CD4-positive, alpha-beta memory T cell (primary cell): ENCODE measurements at regions of chr1 and their contacts with region 1.

Region 1: DNA sequence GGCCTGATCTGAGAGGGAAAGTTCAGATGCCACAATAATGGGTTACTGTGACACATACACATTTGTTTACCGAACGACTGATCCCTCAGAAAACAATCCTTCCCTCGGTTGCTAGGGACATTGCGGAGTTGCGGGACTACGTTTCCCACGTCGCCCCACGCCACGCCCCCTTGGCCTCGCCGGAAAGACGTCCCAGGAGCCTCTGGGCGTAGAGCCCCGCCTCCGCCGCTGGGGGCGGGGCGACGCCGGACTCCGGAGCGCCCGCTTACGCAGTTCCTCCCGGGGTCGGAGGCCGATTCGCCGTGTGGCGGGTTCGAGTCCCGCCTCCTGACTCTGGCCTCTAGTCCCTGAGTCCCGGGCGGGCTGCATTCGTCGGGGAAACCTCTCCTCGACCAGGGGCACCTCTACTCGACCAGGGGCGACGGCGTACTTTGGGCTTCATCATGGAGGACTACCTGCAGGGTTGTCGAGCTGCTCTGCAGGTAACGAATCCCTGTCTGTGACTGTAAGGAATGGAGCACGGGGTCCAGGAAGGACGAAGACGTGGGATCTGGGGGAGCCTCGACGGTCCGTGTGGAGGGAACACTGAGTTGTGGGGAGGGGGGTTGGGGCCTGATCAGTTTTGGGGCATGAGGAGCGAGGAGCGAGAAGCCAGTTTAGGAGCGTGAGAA is at the start of gene PRUNE1:
- DNase-seq: peak; percentile 92 to 99 (median 96)
- H3K4me3 ChIP-seq: peak within 1 kb of the TSS; percentile 74 to 92
- H3K4me3 Mint-ChIP-seq: peak within 1 kb of the TSS; percentile 88 to 99 (median 95)
- H3K27ac ChIP-seq: peak within 1 kb of the TSS; percentile 88
- H3K27ac Mint-ChIP-seq: peak within 1 kb of the TSS; percentile 90 to 100 (median 99)
- H3K4me1 ChIP-seq: peaks cover 67% of the 10 kb centered on the region
- H3K4me1 Mint-ChIP-seq: peaks cover 47 to 93% (median 69%) of the 10 kb centered on the region in 4 donors
- H3K27me3 ChIP-seq: no peaks in the 10 kb centered on the region
- H3K27me3 Mint-ChIP-seq: no peaks in the 10 kb centered on the region
- total RNA-seq, gene PRUNE1: 35.0 to 38.9 TPM

Region 2: GRCh38 chr1:150979092-150980056 is 29.0 kb before region 1 on chr1:
- CTCF ChIA-PET with region 1: interaction called, 255 read pairs
- POLR2A ChIA-PET with region 1: interaction called, 30 read pairs
- intact Hi-C with region 1: loop called (anchors 1 kb)
- DNase-seq: peak; percentile 83 to 87 (median 85)
- H3K4me3 ChIP-seq: peak overlapping the region in 1 of 2 donors; percentile 52
- H3K4me3 Mint-ChIP-seq: peak overlapping the region in 4 of 8 donors; percentile 29 to 59 (median 41)
- H3K27ac ChIP-seq: peak overlapping the region; percentile 11
- H3K27ac Mint-ChIP-seq: peak overlapping the region in 6 of 7 donors; percentile 48 to 83 (median 64)
- H3K4me1 ChIP-seq: peaks cover 39% of the 10 kb centered on the region
- H3K4me1 Mint-ChIP-seq: peaks cover 20 to 44% (median 31%) of the 10 kb centered on the region in 4 donors
- H3K27me3 ChIP-seq: no peaks in the 10 kb centered on the region
- H3K27me3 Mint-ChIP-seq: no peaks in the 10 kb centered on the region

Region 3: DNA sequence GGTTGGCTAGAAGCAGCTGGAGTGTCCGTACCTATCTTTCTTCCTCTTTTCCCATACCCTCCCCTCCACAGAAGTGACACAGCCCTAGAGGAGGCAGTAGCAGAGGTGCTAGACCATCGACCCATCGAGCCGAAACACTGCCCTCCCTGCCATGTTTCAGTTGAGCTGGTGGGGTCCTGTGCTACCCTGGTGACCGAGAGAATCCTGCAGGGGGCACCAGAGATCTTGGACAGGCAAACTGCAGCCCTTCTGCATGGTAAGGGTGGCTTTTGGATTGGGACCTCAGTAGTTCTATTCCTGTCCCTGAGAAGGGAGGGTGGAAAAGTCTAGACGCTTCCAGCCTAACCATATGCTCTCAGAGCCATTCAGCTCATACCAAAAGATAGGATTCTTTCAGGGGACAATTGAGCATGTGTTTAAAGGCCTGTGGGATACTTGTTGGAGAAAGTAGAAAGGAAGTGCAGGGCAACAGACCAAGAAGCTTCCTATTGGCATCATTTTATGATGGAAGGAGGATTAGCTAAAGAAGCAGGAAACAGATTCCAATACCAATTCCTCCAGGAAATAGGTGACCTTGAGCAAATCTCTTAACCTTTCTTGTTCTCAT is 16.3 kb after region 1 on chr1:
- CTCF ChIA-PET with region 1: interaction called, 18 read pairs
- POLR2A ChIA-PET with region 1: interaction called, 6 read pairs
- intact Hi-C with region 1: no loop called
- DNase-seq: peak; percentile 81 to 86 (median 85)
- H3K4me3 ChIP-seq: no peak overlapping the region
- H3K4me3 Mint-ChIP-seq: peak overlapping the region in 5 of 8 donors; percentile 22 to 65 (median 54)
- H3K27ac ChIP-seq: no peak overlapping the region
- H3K27ac Mint-ChIP-seq: peak overlapping the region; percentile 41 to 86 (median 73)
- H3K4me1 ChIP-seq: peaks cover 7% of the 10 kb centered on the region
- H3K4me1 Mint-ChIP-seq: peaks cover 5 to 11% (median 6%) of the 10 kb centered on the region in 4 donors
- H3K27me3 ChIP-seq: no peaks in the 10 kb centered on the region
- H3K27me3 Mint-ChIP-seq: no peaks in the 10 kb centered on the region

Region 4: GRCh38 chr1:151059078-151059907 is 51.0 kb after region 1 on chr1 and contains the start of gene CDC42SE1:
- CTCF ChIA-PET with region 1: interaction called, 9 read pairs
- POLR2A ChIA-PET with region 1: interaction called, 34 read pairs
- intact Hi-C with region 1: loop called (anchors 1 kb)
- DNase-seq: peak; percentile 81 to 85 (median 85)
- H3K4me3 ChIP-seq: peak within 1 kb of the TSS; percentile 89 to 93
- H3K4me3 Mint-ChIP-seq: peak within 1 kb of the TSS; percentile 96 to 100 (median 100)
- H3K27ac ChIP-seq: peak within 1 kb of the TSS; percentile 90
- H3K27ac Mint-ChIP-seq: peak within 1 kb of the TSS; percentile 98 to 100 (median 99)
- H3K4me1 ChIP-seq: peaks cover 45% of the 10 kb centered on the region
- H3K4me1 Mint-ChIP-seq: peaks cover 31 to 70% (median 38%) of the 10 kb centered on the region in 4 donors
- H3K27me3 ChIP-seq: no peaks in the 10 kb centered on the region
- H3K27me3 Mint-ChIP-seq: peaks cover 0 to 1% of the 10 kb centered on the region in 2 donors
- total RNA-seq, gene CDC42SE1: 478 to 483 TPM

Region 5: DNA sequence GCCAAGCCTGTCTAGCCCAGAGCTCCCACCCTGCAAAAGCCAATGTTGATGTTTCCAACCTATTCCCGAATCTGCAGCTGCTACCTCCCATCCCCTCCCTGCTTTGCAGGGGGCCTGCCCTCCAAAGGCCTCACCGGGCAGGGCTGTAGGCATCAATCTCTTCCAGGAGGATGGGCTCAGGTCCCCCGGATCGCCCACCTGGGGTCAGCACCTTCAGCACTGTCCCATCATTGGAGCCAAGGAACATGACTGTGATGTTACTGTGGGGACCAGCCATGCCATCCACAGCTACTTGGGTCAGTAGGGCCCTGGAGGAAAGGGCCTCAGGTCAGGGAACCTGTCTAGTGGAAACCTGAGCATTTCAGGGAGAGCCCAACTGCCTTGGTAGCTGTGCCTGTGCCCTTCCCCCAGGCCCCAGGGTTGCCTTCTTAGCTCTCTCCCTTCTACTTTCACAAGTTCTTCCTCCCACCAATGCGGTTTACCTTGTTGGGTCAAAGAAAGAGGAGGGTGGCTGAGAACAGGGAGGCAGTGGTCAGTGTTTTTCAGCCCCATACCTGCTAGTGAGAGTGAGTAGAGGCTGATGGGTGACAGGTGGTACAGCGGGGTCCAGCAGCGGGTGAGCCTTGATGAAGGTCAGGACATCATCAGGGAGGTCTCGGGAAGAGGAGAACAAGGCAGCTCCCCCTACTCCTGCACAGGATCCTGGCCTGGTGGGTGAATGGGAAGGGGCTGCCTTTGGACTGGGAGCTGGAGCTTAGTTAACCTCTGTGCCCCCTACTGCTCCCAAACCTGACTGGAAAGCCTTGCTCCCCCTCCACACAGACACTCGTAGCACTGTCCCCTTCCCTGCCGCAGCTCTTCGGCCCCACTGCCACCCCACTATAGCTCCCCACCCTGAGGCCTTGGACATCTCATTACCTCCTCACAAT is 127.4 kb after region 1 on chr1:
- CTCF ChIA-PET with region 1: no interaction called
- POLR2A ChIA-PET with region 1: no interaction called
- intact Hi-C with region 1: no loop called
- DNase-seq: no peak
- H3K4me3 ChIP-seq: no peak overlapping the region
- H3K4me3 Mint-ChIP-seq: no peak overlapping the region
- H3K27ac ChIP-seq: no peak overlapping the region
- H3K27ac Mint-ChIP-seq: no peak overlapping the region
- H3K4me1 ChIP-seq: peaks cover 12% of the 10 kb centered on the region
- H3K4me1 Mint-ChIP-seq: peaks cover 2 to 11% (median 7%) of the 10 kb centered on the region in 4 donors
- H3K27me3 ChIP-seq: peaks cover 5% of the 10 kb centered on the region
- H3K27me3 Mint-ChIP-seq: peaks cover 3 to 9% of the 10 kb centered on the region in 2 donors

Region 6: DNA sequence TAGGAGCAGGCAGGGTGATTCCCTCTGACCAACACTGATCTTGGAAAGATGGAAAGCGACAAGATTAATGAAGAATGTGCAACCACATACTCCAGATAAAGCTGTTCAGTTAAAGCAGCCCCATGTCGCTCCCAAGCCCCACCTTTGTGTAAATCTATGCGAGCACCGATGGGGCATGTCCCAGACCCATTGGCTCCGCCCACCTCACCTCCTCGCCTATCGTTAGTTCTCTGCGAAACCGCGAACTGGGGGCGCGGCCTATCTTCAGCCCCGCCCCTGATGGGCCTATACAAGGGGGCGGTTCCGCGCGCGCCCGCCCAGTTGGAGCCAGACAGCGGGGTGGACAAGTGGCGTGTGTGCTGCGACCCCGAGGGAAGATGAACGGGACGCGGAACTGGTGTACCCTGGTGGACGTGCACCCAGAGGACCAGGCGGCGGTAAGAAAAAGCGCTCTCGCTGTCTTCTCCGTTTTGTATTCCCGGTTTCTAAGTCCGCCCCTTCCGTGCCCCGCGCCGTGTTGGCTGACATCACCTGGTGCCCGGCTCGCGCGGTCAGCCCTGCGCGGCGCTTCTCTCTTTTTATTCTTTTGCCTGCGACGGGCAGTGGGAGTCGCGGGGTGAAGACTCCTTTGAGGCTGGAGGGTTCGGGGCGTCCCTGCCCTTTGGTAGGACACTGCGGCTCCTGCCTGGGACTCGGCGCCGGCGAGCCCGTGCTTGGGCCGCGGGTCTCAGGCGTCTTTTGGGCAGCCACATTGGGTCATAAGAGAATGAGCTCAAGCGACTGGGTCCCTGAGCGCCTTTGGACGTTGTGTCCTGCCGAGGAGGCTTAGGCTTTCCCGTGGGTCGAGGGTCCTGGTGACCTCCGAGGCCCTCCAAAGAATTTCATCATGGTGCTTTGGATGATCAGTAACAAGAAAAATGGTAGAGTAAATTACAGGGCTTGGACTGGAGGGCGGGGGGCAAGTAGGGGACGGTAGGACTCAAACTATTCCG is 532.0 kb after region 1 on chr1 and contains the start of gene TUFT1:
- CTCF ChIA-PET with region 1: no interaction called
- POLR2A ChIA-PET with region 1: no interaction called
- intact Hi-C with region 1: no loop called
- DNase-seq: peak; percentile 92 to 96 (median 93)
- H3K4me3 ChIP-seq: peak within 1 kb of the TSS; percentile 50 to 62
- H3K4me3 Mint-ChIP-seq: peak within 1 kb of the TSS; percentile 95 to 98 (median 96)
- H3K27ac ChIP-seq: peak within 1 kb of the TSS; percentile 57
- H3K27ac Mint-ChIP-seq: peak within 1 kb of the TSS; percentile 78 to 97 (median 94)
- H3K4me1 ChIP-seq: peaks cover 18% of the 10 kb centered on the region
- H3K4me1 Mint-ChIP-seq: peaks cover 8 to 26% (median 19%) of the 10 kb centered on the region in 4 donors
- H3K27me3 ChIP-seq: no peaks in the 10 kb centered on the region
- H3K27me3 Mint-ChIP-seq: no peaks in the 10 kb centered on the region
- total RNA-seq, gene TUFT1: 3.5 to 4.4 TPM